H1 (cell line): ENCODE measurements at regions of chr16 and their contacts with region 1.

Region 1: DNA sequence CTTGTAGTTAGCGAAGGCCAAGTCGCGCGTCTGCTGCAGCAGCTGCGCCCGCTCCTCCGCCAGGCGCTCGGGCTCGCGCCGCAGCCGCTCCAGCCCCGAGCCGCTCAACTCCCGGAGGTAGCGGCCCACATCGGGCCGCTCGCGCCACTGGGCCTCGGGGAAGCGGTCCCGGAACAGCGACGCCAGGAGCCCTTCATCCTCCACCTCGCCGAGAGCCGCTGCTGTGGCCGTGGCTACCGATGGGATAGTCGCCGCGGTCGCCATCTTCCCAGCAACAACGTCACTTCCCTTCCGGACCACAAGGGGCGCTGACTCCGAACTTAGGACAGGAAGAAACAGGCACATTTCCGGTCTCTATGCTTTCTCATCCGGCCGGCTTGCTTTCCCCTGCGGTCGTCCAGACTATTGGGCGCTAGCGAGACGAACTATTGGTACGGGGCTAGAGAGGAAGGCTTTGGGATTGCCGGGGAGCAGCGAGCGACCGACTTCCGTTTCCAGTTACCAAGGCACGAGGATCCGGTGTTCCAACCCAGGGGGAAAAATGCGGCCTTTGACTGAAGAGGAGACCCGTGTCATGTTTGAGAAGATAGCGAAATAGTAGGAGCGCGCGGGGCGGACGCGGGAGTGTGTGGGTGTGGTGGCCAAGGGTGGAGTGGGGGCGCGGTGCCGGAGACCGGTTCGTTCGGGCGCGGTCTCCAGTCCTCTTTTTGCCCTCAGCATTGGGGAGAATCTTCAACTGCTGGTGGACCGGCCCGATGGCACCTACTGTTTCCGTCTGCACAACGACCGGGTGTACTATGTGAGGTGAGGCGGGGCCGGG is at the starts of genes COG8 and NIP7:
- DNase-seq: peak; percentile 93 to 97
- H3K4me3 ChIP-seq: peak within 1 kb of the TSS; percentile 71 to 98 (median 92)
- H3K27ac ChIP-seq: peak within 1 kb of the TSS; percentile 81
- H3K4me1 ChIP-seq: peaks cover 0 to 9% (median 3%) of the 10 kb centered on the region in 4 experiments; a peak in 4 of 7 replicates
- H3K27me3 ChIP-seq: no peaks in the 10 kb centered on the region
- CTCF ChIP-seq: peak; percentile 63 to 89 (median 79)
- EP300 ChIP-seq: no peak
- POLR2A ChIP-seq: peak; percentile 58 to 79
- RAD21 ChIP-seq: no peak
- total RNA-seq, gene COG8: 55.4 and 55.6 TPM in 2 replicates
- total RNA-seq, gene NIP7: 52.1 and 52.2 TPM in 2 replicates

Region 2: GRCh38 chr16:69310653-69311532 is 28.6 kb before region 1 on chr16 and contains the start of gene VPS4A:
- CTCF ChIA-PET with region 1: interaction called, 4 read pairs
- POLR2A ChIA-PET with region 1: interaction called, 497 read pairs
- DNase-seq: peak; percentile 88 to 99
- H3K4me3 ChIP-seq: peak within 1 kb of the TSS; percentile 53 to 84 (median 78)
- H3K27ac ChIP-seq: peak within 1 kb of the TSS; percentile 69; the same call in 1 of the 2 replicates
- H3K4me1 ChIP-seq: peaks cover 0 to 4% (median 3%) of the 10 kb centered on the region in 4 experiments; a peak in 4 of 7 replicates
- H3K27me3 ChIP-seq: no peaks in the 10 kb centered on the region
- CTCF ChIP-seq: peak; percentile 92 to 98 (median 96)
- EP300 ChIP-seq: no peak; a peak in 1 of 3 replicates
- POLR2A ChIP-seq: peak in 1 of 2 experiments; percentile 64; a peak in 1 of 3 replicates
- RAD21 ChIP-seq: peak; percentile 19 to 44; a peak in 3 of 4 replicates
- total RNA-seq, gene VPS4A: 24.1 and 26.6 TPM in 2 replicates

Region 3: GRCh38 chr16:69324013-69324531 is 15.4 kb before region 1 on chr16:
- CTCF ChIA-PET with region 1: interaction called, 10 read pairs
- POLR2A ChIA-PET with region 1: interaction called, 497 read pairs
- DNase-seq: no peak
- H3K4me3 ChIP-seq: no peak overlapping the region
- H3K27ac ChIP-seq: no peak overlapping the region
- H3K4me1 ChIP-seq: peaks cover 5 to 9% (median 7%) of the 10 kb centered on the region in 4 experiments
- H3K27me3 ChIP-seq: no peaks in the 10 kb centered on the region
- CTCF ChIP-seq: no peak
- EP300 ChIP-seq: no peak
- POLR2A ChIP-seq: 0 out of 3 replicates have a peak, but pooled peaks of 1 of the 2 experiments have one; percentile 48
- RAD21 ChIP-seq: no peak

Region 4: GRCh38 chr16:69351309-69352027 is 12.0 kb after region 1 on chr16 and contains the start of gene TMED6:
- CTCF ChIA-PET with region 1: interaction called, 5 read pairs
- POLR2A ChIA-PET with region 1: interaction called, 18 read pairs
- DNase-seq: no peak
- H3K4me3 ChIP-seq: no peak within 1 kb of the TSS
- H3K27ac ChIP-seq: no peak within 1 kb of the TSS
- H3K4me1 ChIP-seq: no peaks in the 10 kb centered on the region
- H3K27me3 ChIP-seq: no peaks in the 10 kb centered on the region
- CTCF ChIP-seq: no peak
- EP300 ChIP-seq: no peak
- POLR2A ChIP-seq: no peak
- RAD21 ChIP-seq: no peak
- total RNA-seq, gene TMED6: 0.94 TPM in 1 of 2 replicates, not detected in the other

Region 5: DNA sequence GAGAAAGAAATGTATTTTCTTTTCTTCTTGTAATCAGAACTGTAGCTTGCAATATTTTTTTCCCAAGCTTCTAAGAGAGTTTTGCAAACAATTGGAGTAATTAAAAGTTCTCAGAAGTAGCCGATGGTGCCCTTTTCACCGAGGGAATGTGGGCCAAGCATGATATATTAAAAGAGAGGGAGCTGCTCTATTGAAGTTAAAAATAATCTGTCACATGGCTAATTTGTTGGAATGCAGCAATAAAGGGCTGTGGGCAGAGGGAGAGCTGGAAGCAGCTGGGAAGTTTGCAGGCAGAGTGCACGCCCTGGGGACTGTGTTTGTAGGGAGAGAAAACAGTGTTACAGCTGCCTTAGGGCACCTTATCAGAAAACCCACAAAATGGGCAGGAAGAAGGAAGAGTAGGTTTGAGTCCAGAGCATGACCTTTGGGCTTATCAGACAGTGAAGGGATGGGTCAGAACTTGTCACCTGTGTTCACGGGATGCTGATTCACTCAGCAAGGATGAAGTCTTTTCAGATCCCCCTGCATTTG is 64.8 kb after region 1 on chr16:
- CTCF ChIA-PET with region 1: no interaction called
- POLR2A ChIA-PET with region 1: no interaction called
- DNase-seq: no peak
- H3K4me3 ChIP-seq: no peak overlapping the region
- H3K27ac ChIP-seq: no peak overlapping the region
- H3K4me1 ChIP-seq: peaks cover 0 to 4% (median 1%) of the 10 kb centered on the region in 4 experiments; a peak in 2 of 7 replicates
- H3K27me3 ChIP-seq: no peaks in the 10 kb centered on the region
- CTCF ChIP-seq: no peak
- EP300 ChIP-seq: no peak
- POLR2A ChIP-seq: no peak
- RAD21 ChIP-seq: no peak